Endothelial cell of umbilical vein (primary cell): ENCODE measurements at regions of chr2 and their contacts with region 1.

Region 1: DNA sequence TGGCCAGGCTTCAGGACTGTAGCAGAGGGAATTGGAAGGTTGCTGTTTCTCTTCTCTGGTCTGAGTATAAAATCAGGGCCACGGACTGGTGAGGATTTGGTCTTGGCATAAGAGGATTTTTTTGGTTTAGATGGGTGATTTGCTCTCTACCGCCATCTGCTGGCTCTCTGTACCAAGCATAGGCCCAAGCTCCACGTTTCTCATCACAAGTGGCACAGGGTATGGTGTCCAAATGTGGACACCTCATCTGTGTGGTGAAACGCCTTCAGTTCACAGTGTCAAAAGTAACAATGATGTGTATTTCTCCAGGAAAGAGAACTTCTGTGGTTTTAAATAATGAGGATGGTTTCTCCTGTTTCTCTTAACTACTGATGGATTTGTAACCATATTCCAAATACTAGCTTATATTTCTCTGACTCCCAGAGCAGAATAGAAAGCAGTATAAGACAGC is 115.1 kb downstream of the EML6 start:
- DNase-seq: peak; percentile 78
- H3K4me3 ChIP-seq: no peak overlapping the region
- H3K27ac ChIP-seq: no peak overlapping the region
- H3K4me1 ChIP-seq: no peaks in the 10 kb centered on the region
- H3K27me3 ChIP-seq: no peaks in the 10 kb centered on the region
- CTCF ChIP-seq: peak; percentile 80 to 87
- POLR2A ChIP-seq: no peak

Region 2: GRCh38 chr2:54522624-54523281 is 315.9 kb before region 1 on chr2:
- CTCF ChIA-PET with region 1: interaction called, 9 read pairs
- POLR2A ChIA-PET with region 1: no interaction called
- dilution Hi-C with region 1: no loop called
- intact Hi-C with region 1: loop called (anchors 5 kb)
- DNase-seq: peak; percentile 44
- H3K4me3 ChIP-seq: no peak overlapping the region
- H3K27ac ChIP-seq: no peak overlapping the region
- H3K4me1 ChIP-seq: peaks cover 10% of the 10 kb centered on the region
- H3K27me3 ChIP-seq: no peaks in the 10 kb centered on the region
- CTCF ChIP-seq: peak; percentile 48 to 68
- POLR2A ChIP-seq: no peak

Region 3: DNA sequence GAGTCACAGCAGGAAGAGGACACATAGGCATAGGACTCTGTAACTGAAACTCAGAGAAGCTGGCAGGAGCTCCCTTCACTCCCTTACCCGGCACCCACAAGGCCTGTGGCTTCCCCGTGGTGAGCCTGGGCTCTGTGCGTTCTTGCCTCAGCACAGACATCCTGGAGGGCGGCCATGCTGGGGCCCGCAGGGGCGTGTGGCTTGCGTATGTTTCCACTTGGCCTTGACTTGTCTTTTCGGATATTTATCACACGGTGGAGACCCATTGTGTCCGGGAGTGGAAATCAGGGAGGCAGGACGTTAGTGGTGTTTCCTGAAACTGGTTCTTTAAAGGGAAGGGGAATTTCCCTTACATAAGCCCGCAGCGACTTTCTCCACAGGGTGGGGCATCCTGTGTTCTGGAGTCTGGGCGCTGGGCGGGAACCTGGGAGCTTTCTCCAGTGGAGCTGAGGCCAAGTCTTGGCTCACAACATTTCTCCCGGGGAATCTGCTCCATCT is 165.1 kb before region 1 on chr2:
- CTCF ChIA-PET with region 1: interaction called, 10 read pairs
- POLR2A ChIA-PET with region 1: no interaction called
- dilution Hi-C with region 1: no loop called
- intact Hi-C with region 1: no loop called
- DNase-seq: peak; percentile 97
- H3K4me3 ChIP-seq: no peak overlapping the region
- H3K27ac ChIP-seq: peak overlapping the region; percentile 89
- H3K4me1 ChIP-seq: peaks cover 14% of the 10 kb centered on the region
- H3K27me3 ChIP-seq: peaks cover 0 to 2% of the 10 kb centered on the region in 2 experiments
- CTCF ChIP-seq: no peak
- POLR2A ChIP-seq: no peak

Region 4: DNA sequence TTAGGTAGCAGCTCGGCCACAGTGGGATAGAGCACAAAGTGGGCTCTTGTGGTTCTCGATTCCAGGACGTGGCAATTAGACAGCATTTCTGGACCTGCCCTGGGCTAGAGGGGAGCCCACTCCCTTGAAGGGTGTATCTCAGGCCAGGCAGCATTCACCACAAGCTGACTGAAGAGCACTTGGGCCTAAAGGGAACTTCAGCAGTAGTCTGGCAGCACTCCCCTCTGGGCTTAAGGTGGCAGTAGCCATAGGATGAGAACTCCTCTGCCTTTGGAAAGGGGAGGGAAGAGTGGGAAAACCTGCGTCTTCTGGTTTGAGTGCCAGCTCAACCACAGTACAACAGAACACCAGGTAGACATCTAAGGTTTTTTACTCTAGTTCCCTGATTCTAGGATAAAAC is 143.2 kb before region 1 on chr2:
- CTCF ChIA-PET with region 1: no interaction called
- POLR2A ChIA-PET with region 1: no interaction called
- dilution Hi-C with region 1: no loop called
- intact Hi-C with region 1: no loop called
- DNase-seq: no peak
- H3K4me3 ChIP-seq: no peak overlapping the region
- H3K27ac ChIP-seq: no peak overlapping the region
- H3K4me1 ChIP-seq: no peaks in the 10 kb centered on the region
- H3K27me3 ChIP-seq: no peaks in the 10 kb centered on the region
- CTCF ChIP-seq: no peak
- POLR2A ChIP-seq: no peak

Region 5: DNA sequence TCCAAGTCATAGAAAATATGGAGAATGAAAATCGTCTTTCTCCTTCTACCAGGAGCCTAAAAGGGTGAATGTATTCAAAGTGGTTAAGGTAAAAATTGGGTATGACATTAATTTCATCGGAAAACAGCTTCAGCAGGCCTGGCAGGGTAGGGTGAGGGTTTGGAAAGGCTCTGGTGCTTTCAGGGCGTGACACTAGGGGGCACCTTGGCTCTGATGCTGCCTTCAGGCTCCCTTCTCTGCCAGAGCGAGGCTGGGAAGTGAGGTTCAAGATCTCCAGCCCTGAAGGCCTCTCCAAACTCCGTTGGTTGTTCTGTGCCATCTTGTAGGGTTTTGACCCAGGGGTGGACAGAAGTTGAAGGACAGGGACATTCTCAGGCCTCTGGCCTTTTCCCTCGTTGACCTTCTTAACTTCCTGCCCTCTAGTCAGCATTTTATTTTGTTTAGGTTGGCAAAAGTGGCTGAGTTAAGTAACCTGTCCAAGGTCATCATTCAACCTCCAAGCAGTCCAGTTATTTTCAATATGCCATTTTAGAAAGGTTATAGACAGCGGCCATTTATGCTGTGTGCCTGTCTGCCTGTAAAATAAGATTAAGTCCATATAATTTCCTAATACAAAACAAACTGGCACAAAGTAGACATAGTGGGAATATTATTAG is 74.8 kb before region 1 on chr2:
- CTCF ChIA-PET with region 1: interaction called, 11 read pairs
- POLR2A ChIA-PET with region 1: no interaction called
- dilution Hi-C with region 1: no loop called
- intact Hi-C with region 1: loop called (anchors 1 kb)
- DNase-seq: no peak
- H3K4me3 ChIP-seq: no peak overlapping the region
- H3K27ac ChIP-seq: no peak overlapping the region
- H3K4me1 ChIP-seq: peaks cover 11% of the 10 kb centered on the region
- H3K27me3 ChIP-seq: no peaks in the 10 kb centered on the region
- CTCF ChIP-seq: peak in 1 of 2 donors; percentile 20
- POLR2A ChIP-seq: no peak

Region 6: DNA sequence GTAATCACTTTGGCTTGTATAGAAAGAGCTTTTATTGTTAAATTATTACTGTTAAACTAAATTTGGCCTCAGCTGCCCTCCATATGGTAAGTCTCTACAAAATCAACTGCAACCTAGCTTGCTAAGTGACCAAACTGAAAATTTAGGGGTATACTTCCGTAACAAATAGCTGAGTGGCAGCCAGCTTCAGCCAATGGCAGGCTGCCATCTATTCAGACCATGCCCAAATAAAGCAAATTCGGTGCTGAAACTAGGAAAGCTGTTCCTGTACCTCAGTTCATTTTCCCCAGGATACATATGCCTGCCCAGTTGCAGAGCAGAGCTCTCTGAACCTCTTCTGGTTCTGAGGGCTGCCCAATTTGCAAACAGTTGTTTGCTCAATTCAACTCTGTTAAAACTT is 20.4 kb before region 1 on chr2:
- CTCF ChIA-PET with region 1: interaction called, 17 read pairs
- POLR2A ChIA-PET with region 1: no interaction called
- dilution Hi-C with region 1: no loop called
- intact Hi-C with region 1: no loop called
- DNase-seq: no peak
- H3K4me3 ChIP-seq: no peak overlapping the region
- H3K27ac ChIP-seq: no peak overlapping the region
- H3K4me1 ChIP-seq: no peaks in the 10 kb centered on the region
- H3K27me3 ChIP-seq: peaks cover 5 to 6% of the 10 kb centered on the region in 2 experiments
- CTCF ChIP-seq: no peak
- POLR2A ChIP-seq: no peak

Region 7: DNA sequence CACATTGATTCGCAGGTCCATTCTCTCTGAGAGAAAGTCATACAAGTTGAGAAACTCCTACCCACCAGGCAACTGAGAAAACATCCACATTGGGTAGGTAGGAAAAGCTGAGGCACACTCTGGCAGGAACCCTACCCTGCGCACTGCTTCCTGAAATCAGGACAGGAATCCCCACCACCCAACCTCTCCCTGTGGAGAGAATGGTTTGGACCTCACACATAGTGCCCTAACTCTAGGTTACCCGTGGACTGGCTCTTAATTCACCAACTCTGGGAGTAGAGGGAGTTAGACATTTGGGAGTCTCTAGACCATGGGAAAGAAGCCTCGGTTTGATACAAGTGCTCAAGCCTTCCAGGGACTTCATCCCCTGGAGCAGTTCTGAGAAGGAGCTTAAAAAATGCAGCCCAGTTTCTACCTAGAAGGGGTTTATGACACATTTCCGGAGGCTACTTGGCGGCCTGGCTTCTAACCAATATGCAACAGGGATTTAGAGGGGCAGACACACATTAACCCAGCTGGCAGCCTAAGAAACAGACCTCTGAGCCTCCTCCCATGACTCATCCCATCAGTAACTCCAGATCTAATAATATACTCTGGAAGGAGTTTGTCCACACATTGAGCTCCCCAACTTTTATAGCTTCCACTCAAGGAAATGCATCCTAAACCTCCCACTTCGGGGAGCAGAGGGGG is 21.5 kb after region 1 on chr2:
- CTCF ChIA-PET with region 1: interaction called, 10 read pairs
- POLR2A ChIA-PET with region 1: no interaction called
- dilution Hi-C with region 1: no loop called
- intact Hi-C with region 1: no loop called
- DNase-seq: no peak
- H3K4me3 ChIP-seq: no peak overlapping the region
- H3K27ac ChIP-seq: no peak overlapping the region
- H3K4me1 ChIP-seq: no peaks in the 10 kb centered on the region
- H3K27me3 ChIP-seq: peaks cover 0 to 5% of the 10 kb centered on the region in 2 experiments
- CTCF ChIP-seq: no peak
- POLR2A ChIP-seq: no peak

Region 8: GRCh38 chr2:54936766-54937165 is 98.2 kb after region 1 on chr2:
- CTCF ChIA-PET with region 1: no interaction called
- POLR2A ChIA-PET with region 1: no interaction called
- dilution Hi-C with region 1: no loop called
- intact Hi-C with region 1: no loop called
- DNase-seq: no peak
- H3K4me3 ChIP-seq: no peak overlapping the region
- H3K27ac ChIP-seq: no peak overlapping the region
- H3K4me1 ChIP-seq: no peaks in the 10 kb centered on the region
- H3K27me3 ChIP-seq: peaks cover 6 to 9% of the 10 kb centered on the region in 2 experiments
- CTCF ChIP-seq: no peak
- POLR2A ChIP-seq: no peak

Region 9: GRCh38 chr2:55175254-55176025 is 336.8 kb after region 1 on chr2:
- CTCF ChIA-PET with region 1: interaction called, 23 read pairs
- POLR2A ChIA-PET with region 1: no interaction called
- dilution Hi-C with region 1: no loop called
- intact Hi-C with region 1: loop called (anchors 1 kb)
- DNase-seq: peak; percentile 70
- H3K4me3 ChIP-seq: no peak overlapping the region
- H3K27ac ChIP-seq: no peak overlapping the region
- H3K4me1 ChIP-seq: no peaks in the 10 kb centered on the region
- H3K27me3 ChIP-seq: no peaks in the 10 kb centered on the region
- CTCF ChIP-seq: peak; percentile 33 to 38
- POLR2A ChIP-seq: no peak

Region 10: GRCh38 chr2:55490554-55490953 is 651.9 kb after region 1 on chr2:
- CTCF ChIA-PET with region 1: no interaction called
- POLR2A ChIA-PET with region 1: no interaction called
- dilution Hi-C with region 1: no loop called
- intact Hi-C with region 1: no loop called
- DNase-seq: peak; percentile 84
- H3K4me3 ChIP-seq: no peak overlapping the region
- H3K27ac ChIP-seq: no peak overlapping the region
- H3K4me1 ChIP-seq: no peaks in the 10 kb centered on the region
- H3K27me3 ChIP-seq: peaks cover 2 to 6% of the 10 kb centered on the region in 2 experiments
- CTCF ChIP-seq: no peak
- POLR2A ChIP-seq: no peak